Natural killer cell (primary cell): ENCODE measurements at regions of chr18 and their contacts with region 1.

Region 1: DNA sequence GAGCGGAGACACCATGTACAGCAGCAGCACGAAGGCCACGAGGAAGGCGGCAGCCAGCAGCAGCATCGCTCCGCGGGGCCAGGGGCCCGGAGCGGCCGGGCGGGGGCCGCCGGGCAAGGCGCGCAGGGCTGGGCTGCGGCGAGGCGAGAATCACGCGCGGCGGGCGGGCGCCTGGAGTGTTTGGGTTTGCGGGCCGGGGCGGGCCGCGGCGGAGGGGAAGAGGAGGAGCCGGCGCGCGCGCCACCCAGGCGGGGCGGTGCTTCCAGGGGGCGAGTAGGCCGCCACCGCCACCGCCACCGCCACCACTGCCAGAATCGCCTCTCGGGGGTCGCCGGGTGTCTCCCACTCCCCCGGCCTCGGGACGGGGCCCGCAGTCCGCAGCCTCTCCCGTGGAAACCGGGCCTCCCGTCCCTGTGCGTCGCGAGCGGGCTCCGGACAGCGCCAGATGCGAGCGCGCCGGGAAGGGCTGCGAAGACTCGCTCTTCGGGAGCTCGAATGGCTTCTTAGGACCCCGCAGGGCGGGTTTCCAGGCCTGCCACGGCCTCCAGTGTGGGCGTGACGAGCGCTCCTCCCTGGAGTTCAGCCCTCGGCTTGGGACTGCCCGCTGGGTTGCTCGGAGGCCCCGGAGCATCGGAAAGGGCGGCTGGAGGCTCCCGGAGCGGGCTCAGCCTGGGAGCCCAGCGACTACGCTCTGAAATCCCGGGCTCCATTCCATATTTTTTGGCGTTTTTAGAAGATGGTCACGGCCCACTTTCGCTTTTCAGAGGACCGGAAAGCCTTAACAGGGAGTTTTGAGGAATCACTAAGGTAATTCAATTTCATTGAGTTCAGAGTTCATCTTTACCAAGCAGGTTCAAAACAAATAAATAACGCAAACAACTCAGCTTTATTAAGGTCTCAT is at the start of gene KDSR:
- DNase-seq: peak; percentile 79 to 86
- ATAC-seq: peak; percentile 83 to 91 (median 87)
- H3K4me3 ChIP-seq: peak within 1 kb of the TSS; percentile 93
- H3K4me3 Mint-ChIP-seq: peak within 1 kb of the TSS; percentile 91
- H3K27ac ChIP-seq: peak within 1 kb of the TSS; percentile 78
- H3K27ac Mint-ChIP-seq: peak within 1 kb of the TSS; percentile 50 to 69
- H3K4me1 ChIP-seq: peaks cover 30% of the 10 kb centered on the region
- H3K4me1 Mint-ChIP-seq: peaks cover 46 to 48% of the 10 kb centered on the region in 2 donors
- H3K27me3 ChIP-seq: no peaks in the 10 kb centered on the region
- H3K27me3 Mint-ChIP-seq: peaks cover 7 to 14% of the 10 kb centered on the region in 2 donors
- CTCF ChIP-seq: no peak
- total RNA-seq, gene KDSR: 11.1 to 15.1 (median 11.6) TPM

Region 2: DNA sequence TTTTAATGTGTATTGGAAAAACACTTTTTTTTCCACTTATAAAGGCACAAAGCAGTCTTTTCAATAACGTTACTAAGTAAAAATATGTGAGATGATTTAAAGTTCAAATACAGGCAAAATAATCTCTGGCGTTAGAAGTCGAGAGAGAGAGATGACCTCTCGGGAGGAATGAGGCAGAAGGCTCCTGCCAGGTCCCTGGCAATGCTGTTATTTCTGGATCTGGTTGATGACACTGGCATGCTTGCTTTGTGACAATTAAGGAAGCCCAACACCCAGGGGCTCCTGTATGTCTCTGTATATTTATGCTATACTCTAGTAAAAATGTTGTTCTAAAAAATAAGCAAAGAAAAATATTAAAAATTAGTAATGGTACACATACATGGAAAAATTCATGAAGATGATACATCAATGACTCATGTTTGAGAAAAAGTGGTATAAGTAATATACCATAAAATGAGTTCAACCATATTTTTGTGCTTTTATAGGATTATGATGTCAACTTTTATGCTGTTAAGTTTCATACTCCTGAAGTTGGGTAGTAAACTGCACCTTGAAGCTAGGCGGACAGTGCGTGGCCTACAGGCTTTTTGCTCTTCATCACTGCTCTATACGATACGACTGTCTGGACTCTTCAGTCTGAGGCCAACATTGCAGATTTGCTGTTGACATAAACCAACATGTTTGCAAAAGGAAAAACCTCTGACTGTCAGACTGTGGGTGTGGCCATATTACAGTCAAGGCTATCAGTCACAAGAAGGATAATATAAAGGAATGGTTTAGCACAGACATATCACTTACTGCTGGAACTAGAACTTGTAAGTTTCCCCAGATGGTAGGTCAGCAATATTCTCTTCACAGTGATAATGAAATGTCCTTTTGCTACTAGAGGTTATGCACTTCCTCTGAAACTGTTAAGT is 35.2 kb after region 1 on chr18:
- intact Hi-C with region 1: loop called (anchors 5 kb)
- DNase-seq: no peak
- ATAC-seq: no peak
- H3K4me3 ChIP-seq: no peak overlapping the region
- H3K4me3 Mint-ChIP-seq: no peak overlapping the region
- H3K27ac ChIP-seq: no peak overlapping the region
- H3K27ac Mint-ChIP-seq: peak overlapping the region in 1 of 2 donors; percentile 36
- H3K4me1 ChIP-seq: no peaks in the 10 kb centered on the region
- H3K4me1 Mint-ChIP-seq: peaks cover 0 to 24% of the 10 kb centered on the region in 2 donors
- H3K27me3 ChIP-seq: no peaks in the 10 kb centered on the region
- H3K27me3 Mint-ChIP-seq: no peaks in the 10 kb centered on the region
- CTCF ChIP-seq: no peak

Region 3: GRCh38 chr18:64840911-64841701 is 1473.8 kb after region 1 on chr18:
- intact Hi-C with region 1: no loop called
- DNase-seq: no peak
- ATAC-seq: no peak
- H3K4me3 ChIP-seq: no peak overlapping the region
- H3K4me3 Mint-ChIP-seq: no peak overlapping the region
- H3K27ac ChIP-seq: no peak overlapping the region
- H3K27ac Mint-ChIP-seq: no peak overlapping the region
- H3K4me1 ChIP-seq: no peaks in the 10 kb centered on the region
- H3K4me1 Mint-ChIP-seq: no peaks in the 10 kb centered on the region
- H3K27me3 ChIP-seq: no peaks in the 10 kb centered on the region
- H3K27me3 Mint-ChIP-seq: no peaks in the 10 kb centered on the region
- CTCF ChIP-seq: no peak